ENCODE measurements at regions of chrX and their contacts with region 1.

Region 1: GRCh38 chrX:134484039-134484438 is 24.1 kb downstream of the HPRT1 start:
- DNase-seq: peak; percentile 7 to 67
- ATAC-seq: peak in 1 of 2 experiments; percentile 67; a peak in 3 of 6 replicates
- H3K4me3 ChIP-seq: no peak overlapping the region
- H3K27ac ChIP-seq: peak overlapping the region; percentile 18 to 23; a peak in 2 of 6 replicates
- H3K4me1 ChIP-seq: no peaks in the 10 kb centered on the region
- CTCF ChIP-seq: peak; percentile 65
- EP300 ChIP-seq: no peak
- POLR2A ChIP-seq: no peak
- RAD21 ChIP-seq: peak; percentile 69 to 78

Region 2: GRCh38 chrX:134764212-134764785 is 280.3 kb after region 1 on chrX:
- CTCF ChIA-PET with region 1: interaction called, 12 read pairs
- POLR2A ChIA-PET with region 1: no interaction called
- DNase-seq: peak; percentile 72 to 82
- ATAC-seq: peak; percentile 96 to 97
- H3K4me3 ChIP-seq: no peak overlapping the region
- H3K27ac ChIP-seq: no peak overlapping the region
- H3K4me1 ChIP-seq: no peaks in the 10 kb centered on the region
- CTCF ChIP-seq: peak; percentile 32; the same call in 2 of the 3 replicates
- EP300 ChIP-seq: no peak
- POLR2A ChIP-seq: no peak
- RAD21 ChIP-seq: peak in 1 of 2 experiments; percentile 29; a peak in 1 of 5 replicates